GM12878 (cell line): ENCODE measurements at regions of chr12 and their contacts with region 1.

Region 1: GRCh38 chr12:79662046-79662811 is 28.5 kb downstream of the PAWR start:
- DNase-seq: no peak
- ATAC-seq: peak; percentile 78
- H3K4me3 ChIP-seq: no peak overlapping the region
- H3K27ac ChIP-seq: no peak overlapping the region
- H3K4me1 ChIP-seq: no peaks in the 10 kb centered on the region
- H3K27me3 ChIP-seq: no peaks in the 10 kb centered on the region
- CTCF ChIP-seq: no peak
- EP300 ChIP-seq: no peak
- POLR2A ChIP-seq: no peak
- RAD21 ChIP-seq: no peak

Region 2: GRCh38 chr12:79378496-79378895 is 283.7 kb before region 1 on chr12:
- CTCF ChIA-PET with region 1: no interaction called
- POLR2A ChIA-PET with region 1: no interaction called
- RAD21 ChIA-PET with region 1: no interaction called
- SMC1A ChIA-PET with region 1: no interaction called
- in situ Hi-C with region 1: no loop called
- intact Hi-C with region 1: no loop called
- DNase-seq: no peak
- ATAC-seq: no peak
- H3K4me3 ChIP-seq: no peak overlapping the region
- H3K27ac ChIP-seq: no peak overlapping the region
- H3K4me1 ChIP-seq: no peaks in the 10 kb centered on the region
- H3K27me3 ChIP-seq: no peaks in the 10 kb centered on the region
- CTCF ChIP-seq: no peak
- EP300 ChIP-seq: no peak
- POLR2A ChIP-seq: no peak
- RAD21 ChIP-seq: no peak

Region 3: DNA sequence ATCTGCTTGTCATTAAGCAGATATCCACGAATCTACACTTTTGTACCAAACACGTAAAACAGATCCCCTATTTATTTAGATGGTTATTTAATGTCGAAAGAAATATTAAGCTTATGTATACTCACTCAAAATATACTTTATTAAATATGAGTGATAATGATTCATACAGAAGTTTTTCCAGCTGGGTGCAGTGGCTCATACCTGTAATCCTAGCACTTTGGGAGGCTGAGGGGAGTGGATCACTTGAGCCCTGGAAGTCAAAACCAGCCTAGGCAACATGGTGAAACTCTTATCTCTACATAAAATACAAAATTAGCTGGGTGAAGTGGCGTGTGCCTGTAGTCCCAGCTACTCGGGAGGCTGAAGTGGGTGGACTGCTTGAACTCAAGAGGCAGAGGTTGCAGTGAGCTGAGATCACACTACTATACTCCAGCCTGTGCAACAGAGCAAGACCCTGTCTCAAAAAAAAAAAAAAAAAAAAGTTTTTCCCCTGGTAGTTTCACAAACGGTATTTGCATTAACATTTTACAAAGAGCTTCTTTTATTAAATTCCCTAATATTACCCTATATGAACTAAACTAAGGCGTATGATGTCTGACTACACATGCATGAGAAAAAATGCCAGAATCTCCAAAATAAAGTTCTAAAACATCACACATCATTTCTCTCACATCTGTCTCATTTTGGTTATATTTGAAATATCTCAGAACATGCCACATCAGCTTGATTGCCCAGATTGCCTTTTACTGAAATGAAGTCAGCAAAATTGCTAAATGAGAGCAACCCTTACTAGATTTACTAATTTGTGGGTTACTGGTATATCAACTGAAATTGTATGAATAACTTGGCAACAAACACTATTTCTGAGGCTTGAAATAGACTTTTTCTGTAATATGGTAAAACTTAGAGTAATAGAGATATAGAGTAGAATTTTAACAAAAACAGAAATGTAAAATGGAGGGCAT is 46.4 kb before region 1 on chr12:
- CTCF ChIA-PET with region 1: no interaction called
- POLR2A ChIA-PET with region 1: no interaction called
- RAD21 ChIA-PET with region 1: no interaction called
- SMC1A ChIA-PET with region 1: interaction called, 11 read pairs
- in situ Hi-C with region 1: no loop called
- intact Hi-C with region 1: no loop called
- DNase-seq: peak; percentile 21
- ATAC-seq: peak; percentile 89
- H3K4me3 ChIP-seq: no peak overlapping the region
- H3K27ac ChIP-seq: peak overlapping the region; percentile 42
- H3K4me1 ChIP-seq: peaks cover 9% of the 10 kb centered on the region
- H3K27me3 ChIP-seq: no peaks in the 10 kb centered on the region
- CTCF ChIP-seq: no peak
- EP300 ChIP-seq: peak; percentile 34 to 38; a peak in 2 of 4 replicates
- POLR2A ChIP-seq: no peak
- RAD21 ChIP-seq: no peak

Region 4: GRCh38 chr12:79674629-79675028 is 12.4 kb after region 1 on chr12:
- CTCF ChIA-PET with region 1: interaction called, 3 read pairs
- POLR2A ChIA-PET with region 1: interaction called, 6 read pairs
- RAD21 ChIA-PET with region 1: no interaction called
- SMC1A ChIA-PET with region 1: interaction called, 10 read pairs
- in situ Hi-C with region 1: no loop called
- intact Hi-C with region 1: no loop called
- DNase-seq: no peak
- ATAC-seq: peak; percentile 28
- H3K4me3 ChIP-seq: no peak overlapping the region
- H3K27ac ChIP-seq: no peak overlapping the region
- H3K4me1 ChIP-seq: no peaks in the 10 kb centered on the region
- H3K27me3 ChIP-seq: no peaks in the 10 kb centered on the region
- CTCF ChIP-seq: no peak
- EP300 ChIP-seq: no peak
- POLR2A ChIP-seq: no peak
- RAD21 ChIP-seq: no peak